ENCODE measurements at regions of chr2 and their contacts with region 1.

Region 1: GRCh38 chr2:102103992-102104871 is 38.3 kb upstream of the IL1R1 start:
- DNase-seq: no peak
- ATAC-seq: no peak
- H3K4me3 ChIP-seq: no peak overlapping the region
- H3K27ac ChIP-seq: peak overlapping the region; percentile 26
- H3K4me1 ChIP-seq: peaks cover 98% of the 10 kb centered on the region
- H3K27me3 ChIP-seq: no peaks in the 10 kb centered on the region
- CTCF ChIP-seq: no peak
- EP300 ChIP-seq: no peak
- POLR2A ChIP-seq: no peak
- RAD21 ChIP-seq: no peak

Region 2: DNA sequence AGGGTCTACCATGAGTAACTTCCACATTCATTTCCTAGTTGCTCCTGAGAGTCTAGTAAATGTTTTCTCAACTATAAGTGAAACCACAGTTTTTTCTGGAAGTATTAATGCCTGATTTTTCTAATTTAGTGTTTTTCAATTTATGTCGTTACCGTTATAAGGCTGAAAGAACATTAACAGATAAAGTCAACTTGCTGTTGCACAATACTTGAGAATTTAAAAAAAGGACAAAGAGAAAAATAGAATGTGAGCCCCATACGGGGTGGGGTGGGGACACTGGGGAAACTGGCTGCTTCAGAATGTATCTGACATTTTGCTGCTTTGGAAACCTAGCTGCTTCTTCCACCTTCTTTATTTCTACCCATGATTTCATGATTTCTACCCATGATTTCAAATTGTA is 825.3 kb before region 1 on chr2:
- CTCF ChIA-PET with region 1: no interaction called
- POLR2A ChIA-PET with region 1: no interaction called
- in situ Hi-C with region 1: no loop called
- intact Hi-C with region 1: no loop called
- DNase-seq: no peak
- ATAC-seq: no peak
- H3K4me3 ChIP-seq: no peak overlapping the region
- H3K27ac ChIP-seq: no peak overlapping the region
- H3K4me1 ChIP-seq: no peaks in the 10 kb centered on the region
- H3K27me3 ChIP-seq: no peaks in the 10 kb centered on the region
- CTCF ChIP-seq: no peak
- EP300 ChIP-seq: no peak
- POLR2A ChIP-seq: no peak
- RAD21 ChIP-seq: no peak

Region 3: GRCh38 chr2:102046135-102046986 is 57.9 kb before region 1 on chr2:
- CTCF ChIA-PET with region 1: no interaction called
- POLR2A ChIA-PET with region 1: interaction called, 5 read pairs
- in situ Hi-C with region 1: no loop called
- intact Hi-C with region 1: loop called (anchors 2 kb)
- DNase-seq: peak; percentile 98
- ATAC-seq: peak; percentile 98
- H3K4me3 ChIP-seq: peak overlapping the region in 1 of 3 experiments; percentile 2; a peak in 1 of 6 replicates
- H3K27ac ChIP-seq: peak overlapping the region; percentile 83
- H3K4me1 ChIP-seq: peaks cover 92% of the 10 kb centered on the region
- H3K27me3 ChIP-seq: no peaks in the 10 kb centered on the region
- CTCF ChIP-seq: peak; percentile 50
- EP300 ChIP-seq: peak in 1 of 2 experiments; percentile 95; a peak in 2 of 4 replicates
- POLR2A ChIP-seq: peak; percentile 42 to 74; a peak in 2 of 4 replicates
- RAD21 ChIP-seq: peak; percentile 65; the same call in 1 of the 2 replicates

Region 4: DNA sequence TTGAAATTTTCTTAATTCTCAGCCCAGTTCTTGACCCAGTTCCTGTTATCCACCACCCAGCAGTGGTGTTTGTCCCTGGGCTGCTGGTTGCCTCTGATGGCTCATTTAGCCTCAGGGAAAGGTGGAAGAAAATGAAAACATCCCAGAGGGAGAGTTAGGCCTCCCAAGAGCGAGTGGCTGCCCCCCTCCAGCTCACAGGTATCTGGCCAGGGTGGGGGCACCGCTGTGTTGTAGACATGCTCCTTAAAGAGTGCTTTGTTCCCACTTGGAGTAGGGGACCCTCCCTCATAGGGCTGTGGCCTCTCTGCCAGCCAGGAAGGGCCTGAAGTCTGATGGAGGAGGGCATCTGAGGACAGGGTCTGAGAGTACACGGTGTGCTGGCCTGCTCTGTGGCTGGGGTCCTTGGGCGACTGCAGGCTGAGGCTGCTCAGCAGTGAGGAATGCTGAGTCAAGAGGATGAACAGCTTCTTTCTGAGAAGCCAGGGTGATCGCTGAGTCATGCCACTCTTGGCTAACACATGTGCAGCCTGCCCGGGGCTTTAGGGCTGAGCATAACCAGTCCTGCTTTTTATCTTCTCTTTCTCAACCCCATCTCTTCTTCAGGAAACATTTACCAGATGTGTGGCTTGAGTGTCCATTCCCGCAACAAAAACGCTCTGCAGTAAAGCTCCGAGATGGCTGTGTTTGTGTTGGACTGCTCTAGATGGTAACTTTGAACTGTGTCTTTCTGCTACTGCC is 40.1 kb before region 1 on chr2:
- CTCF ChIA-PET with region 1: no interaction called
- POLR2A ChIA-PET with region 1: interaction called, 10 read pairs
- in situ Hi-C with region 1: no loop called
- intact Hi-C with region 1: no loop called
- DNase-seq: peak; percentile 88
- ATAC-seq: peak; percentile 84
- H3K4me3 ChIP-seq: peak overlapping the region in 1 of 3 experiments; percentile 7; a peak in 2 of 6 replicates
- H3K27ac ChIP-seq: peak overlapping the region; percentile 71
- H3K4me1 ChIP-seq: peaks cover 82% of the 10 kb centered on the region
- H3K27me3 ChIP-seq: no peaks in the 10 kb centered on the region
- CTCF ChIP-seq: no peak
- EP300 ChIP-seq: peak in 1 of 2 experiments; percentile 67; a peak in 1 of 4 replicates
- POLR2A ChIP-seq: no peak; a peak in 1 of 4 replicates
- RAD21 ChIP-seq: no peak

Region 5: DNA sequence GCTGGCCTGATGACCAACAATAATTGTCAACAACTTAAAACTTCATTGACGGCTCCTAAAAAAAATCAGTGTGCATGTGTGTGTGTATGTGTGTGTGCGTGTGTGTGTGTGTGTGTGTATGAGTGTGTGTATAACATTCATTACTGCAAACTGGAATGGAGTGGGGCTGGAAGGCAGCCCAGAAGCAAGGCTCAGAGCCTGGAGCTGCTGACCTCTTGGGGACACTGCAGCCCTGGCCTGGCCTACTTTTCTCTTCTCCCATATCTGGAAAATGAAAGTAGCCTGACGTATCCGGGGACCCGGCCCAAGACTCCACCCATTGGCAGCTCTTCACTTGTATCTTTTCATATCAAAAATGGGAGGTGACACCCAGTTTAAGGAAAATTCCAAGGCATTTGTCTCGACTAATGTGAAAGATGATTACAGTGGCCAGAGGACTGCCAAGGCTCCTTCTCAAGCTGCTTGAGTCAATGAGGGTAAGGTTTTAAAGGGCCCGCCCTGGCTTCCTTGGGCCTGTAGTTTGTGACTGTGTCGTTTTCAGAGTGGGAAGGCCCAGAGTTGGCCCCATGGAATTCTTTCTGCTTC is 34.1 kb before region 1 on chr2:
- CTCF ChIA-PET with region 1: no interaction called
- POLR2A ChIA-PET with region 1: interaction called, 13 read pairs
- in situ Hi-C with region 1: no loop called
- intact Hi-C with region 1: loop called (anchors 2 kb)
- DNase-seq: peak; percentile 79
- ATAC-seq: peak; percentile 96
- H3K4me3 ChIP-seq: peak overlapping the region; percentile 2 to 51 (median 39); a peak in 5 of 6 replicates
- H3K27ac ChIP-seq: peak overlapping the region; percentile 83
- H3K4me1 ChIP-seq: peaks cover 77% of the 10 kb centered on the region
- H3K27me3 ChIP-seq: no peaks in the 10 kb centered on the region
- CTCF ChIP-seq: peak; percentile 80
- EP300 ChIP-seq: 0 out of 4 replicates have a peak, but pooled peaks of 1 of the 2 experiments have one; percentile 4
- POLR2A ChIP-seq: no peak
- RAD21 ChIP-seq: peak; percentile 73

Region 6: DNA sequence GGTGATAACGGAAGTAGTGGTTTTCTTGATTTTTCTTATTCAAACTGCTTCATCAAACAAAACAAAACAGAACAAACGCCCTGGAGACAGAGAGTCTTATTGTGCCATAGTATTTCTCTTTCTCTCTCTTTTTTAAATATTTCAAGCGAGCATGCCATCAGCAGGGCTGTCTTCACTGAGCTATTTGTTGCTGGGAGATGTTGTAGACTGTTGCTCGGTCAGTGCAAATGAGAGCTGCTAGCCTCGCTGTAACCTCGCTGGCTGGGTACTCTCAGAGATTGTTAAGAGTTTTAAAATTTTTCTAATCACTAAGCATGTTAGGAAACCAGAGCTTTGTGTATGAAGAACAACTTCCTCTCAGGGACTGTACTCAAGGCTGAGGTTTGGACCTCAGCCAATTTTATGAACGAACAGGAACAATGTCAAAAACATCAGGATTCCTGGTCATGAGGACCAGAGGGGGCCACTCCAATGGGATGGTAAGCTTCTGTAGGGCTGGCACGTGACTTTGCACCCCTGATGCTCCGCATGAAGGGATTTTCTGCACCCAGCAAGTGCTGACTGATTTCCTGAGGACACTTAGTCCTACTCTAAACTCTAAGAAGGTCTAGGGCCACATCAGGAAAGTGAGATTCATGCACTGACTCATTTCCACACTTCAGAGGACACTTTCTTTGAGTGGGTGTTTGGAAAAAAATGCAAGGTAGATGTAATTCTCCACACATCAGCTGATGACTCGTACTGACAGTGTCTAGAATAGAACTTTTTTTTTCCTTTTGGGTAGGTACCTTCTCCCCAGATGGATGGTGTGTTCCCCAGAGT is 21.4 kb before region 1 on chr2:
- CTCF ChIA-PET with region 1: no interaction called
- POLR2A ChIA-PET with region 1: interaction called, 12 read pairs
- in situ Hi-C with region 1: no loop called
- intact Hi-C with region 1: no loop called
- DNase-seq: peak; percentile 67
- ATAC-seq: peak; percentile 77
- H3K4me3 ChIP-seq: no peak overlapping the region
- H3K27ac ChIP-seq: peak overlapping the region; percentile 28
- H3K4me1 ChIP-seq: peaks cover 34% of the 10 kb centered on the region
- H3K27me3 ChIP-seq: no peaks in the 10 kb centered on the region
- CTCF ChIP-seq: no peak
- EP300 ChIP-seq: peak in 1 of 2 experiments; percentile 27; a peak in 1 of 4 replicates
- POLR2A ChIP-seq: no peak
- RAD21 ChIP-seq: no peak

Region 7: DNA sequence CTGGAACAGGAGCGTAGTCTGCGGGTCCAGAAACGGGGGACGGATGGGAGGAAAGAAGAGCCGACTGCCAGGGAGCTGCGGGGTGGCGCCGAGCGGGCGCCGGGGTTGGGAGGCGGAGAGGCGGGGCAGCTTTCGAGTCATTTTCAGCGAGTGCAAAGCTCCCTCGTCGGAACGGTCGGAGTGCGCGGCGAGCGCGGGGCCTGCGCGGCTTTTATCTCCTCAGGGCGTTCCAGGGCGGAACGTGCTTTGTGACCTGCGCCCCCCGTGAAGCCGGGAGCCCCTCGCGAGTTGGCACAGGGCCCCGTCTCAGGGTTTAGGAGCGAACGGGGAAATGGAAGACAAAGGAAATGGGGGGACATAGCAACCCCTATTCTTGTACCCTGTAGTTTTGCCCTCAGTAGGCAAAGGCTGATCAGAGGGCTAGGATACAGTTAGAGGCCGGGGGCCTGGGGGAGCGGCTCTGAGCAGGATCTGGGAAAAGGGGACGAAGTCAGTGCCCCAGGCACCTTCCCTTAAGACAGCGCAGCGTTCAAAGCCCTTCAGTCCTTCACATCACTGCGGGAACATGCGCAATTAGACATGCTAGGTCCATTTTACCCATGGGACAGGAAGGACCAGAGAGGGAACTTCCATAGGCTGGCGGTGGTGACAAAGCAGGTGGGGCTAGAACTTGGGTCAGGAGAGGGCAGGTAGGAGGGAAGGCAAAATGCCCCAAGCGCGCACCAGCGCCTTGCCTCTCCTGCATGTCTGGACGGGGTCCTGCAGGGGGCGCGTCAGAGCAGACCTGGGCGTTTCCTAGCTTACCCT is 147.0 kb after region 1 on chr2:
- CTCF ChIA-PET with region 1: no interaction called
- POLR2A ChIA-PET with region 1: no interaction called
- in situ Hi-C with region 1: no loop called
- intact Hi-C with region 1: no loop called
- DNase-seq: peak; percentile 38
- ATAC-seq: peak; percentile 95
- H3K4me3 ChIP-seq: peak overlapping the region; percentile 15 to 76 (median 61)
- H3K27ac ChIP-seq: no peak overlapping the region
- H3K4me1 ChIP-seq: peaks cover 7% of the 10 kb centered on the region
- H3K27me3 ChIP-seq: peaks cover 2 to 47% of the 10 kb centered on the region in 2 experiments; a peak in 4 of 5 replicates
- CTCF ChIP-seq: peak; percentile 85
- EP300 ChIP-seq: peak in 1 of 2 experiments; percentile 17; a peak in 1 of 4 replicates
- POLR2A ChIP-seq: no peak
- RAD21 ChIP-seq: no peak

Region 8: GRCh38 chr2:102271844-102272243 is 167.6 kb after region 1 on chr2:
- CTCF ChIA-PET with region 1: no interaction called
- POLR2A ChIA-PET with region 1: no interaction called
- in situ Hi-C with region 1: no loop called
- intact Hi-C with region 1: no loop called
- DNase-seq: no peak
- ATAC-seq: no peak
- H3K4me3 ChIP-seq: no peak overlapping the region
- H3K27ac ChIP-seq: no peak overlapping the region
- H3K4me1 ChIP-seq: no peaks in the 10 kb centered on the region
- H3K27me3 ChIP-seq: peaks cover 0 to 25% of the 10 kb centered on the region in 2 experiments; a peak in 3 of 5 replicates
- CTCF ChIP-seq: no peak
- EP300 ChIP-seq: no peak
- POLR2A ChIP-seq: no peak
- RAD21 ChIP-seq: no peak

Region 9: GRCh38 chr2:102637358-102637757 is 533.1 kb after region 1 on chr2:
- CTCF ChIA-PET with region 1: no interaction called
- POLR2A ChIA-PET with region 1: no interaction called
- in situ Hi-C with region 1: no loop called
- intact Hi-C with region 1: no loop called
- DNase-seq: no peak
- ATAC-seq: peak; percentile 28; the same call in 1 of the 3 replicates
- H3K4me3 ChIP-seq: no peak overlapping the region
- H3K27ac ChIP-seq: no peak overlapping the region
- H3K4me1 ChIP-seq: no peaks in the 10 kb centered on the region
- H3K27me3 ChIP-seq: peaks cover 0 to 4% of the 10 kb centered on the region in 2 experiments; a peak in 2 of 5 replicates
- CTCF ChIP-seq: no peak
- EP300 ChIP-seq: no peak
- POLR2A ChIP-seq: no peak
- RAD21 ChIP-seq: no peak